ENCODE measurements at regions of chr3 and their contacts with region 1.

Region 1: DNA sequence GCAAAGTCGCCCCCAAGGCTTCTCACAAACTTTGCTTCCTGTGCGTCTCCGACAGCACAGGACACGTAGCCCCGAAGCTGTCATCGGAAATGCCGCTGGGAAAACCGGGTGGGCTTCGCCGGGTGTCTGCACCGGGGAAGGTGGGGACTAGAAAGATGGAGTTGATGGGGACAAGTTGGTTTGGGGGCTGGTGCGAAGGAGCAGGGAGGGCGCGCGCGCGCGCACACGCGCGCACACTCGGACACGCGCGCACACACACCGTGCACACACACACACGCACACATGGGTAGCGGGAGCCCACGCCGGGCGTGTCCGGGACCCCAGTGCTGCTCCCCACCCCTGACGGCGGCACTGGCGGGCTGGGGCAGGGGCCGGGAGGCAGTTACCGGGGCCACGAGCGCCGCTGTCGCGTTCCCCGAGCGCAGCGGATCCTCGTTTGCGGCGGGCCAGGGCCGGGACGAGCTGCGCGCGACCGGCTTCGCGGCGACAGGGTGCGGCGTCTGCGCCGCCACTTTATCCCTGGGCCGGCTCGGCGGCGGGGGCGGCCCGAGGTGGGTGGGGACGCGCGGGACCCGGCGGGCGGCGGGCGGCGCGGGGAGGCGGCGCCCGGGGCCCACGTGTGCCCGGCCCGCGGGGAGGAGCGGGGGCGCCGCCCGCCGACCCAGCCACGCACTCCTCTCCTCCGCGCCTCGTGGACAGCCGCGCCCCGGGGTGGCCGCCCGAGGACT is 547 bp upstream of the MGLL start:
- DNase-seq: no peak
- ATAC-seq: peak; percentile 53
- H3K4me3 ChIP-seq: peak overlapping the region; percentile 95
- H3K27ac ChIP-seq: peak overlapping the region; percentile 76
- H3K4me1 ChIP-seq: peaks cover 7% of the 10 kb centered on the region
- H3K27me3 ChIP-seq: no peaks in the 10 kb centered on the region
- CTCF ChIP-seq: peak in 1 of 3 experiments; percentile 70; a peak in 3 of 6 replicates
- EP300 ChIP-seq: no peak
- POLR2A ChIP-seq: peak; percentile 68
- RAD21 ChIP-seq: peak; percentile 52

Region 2: DNA sequence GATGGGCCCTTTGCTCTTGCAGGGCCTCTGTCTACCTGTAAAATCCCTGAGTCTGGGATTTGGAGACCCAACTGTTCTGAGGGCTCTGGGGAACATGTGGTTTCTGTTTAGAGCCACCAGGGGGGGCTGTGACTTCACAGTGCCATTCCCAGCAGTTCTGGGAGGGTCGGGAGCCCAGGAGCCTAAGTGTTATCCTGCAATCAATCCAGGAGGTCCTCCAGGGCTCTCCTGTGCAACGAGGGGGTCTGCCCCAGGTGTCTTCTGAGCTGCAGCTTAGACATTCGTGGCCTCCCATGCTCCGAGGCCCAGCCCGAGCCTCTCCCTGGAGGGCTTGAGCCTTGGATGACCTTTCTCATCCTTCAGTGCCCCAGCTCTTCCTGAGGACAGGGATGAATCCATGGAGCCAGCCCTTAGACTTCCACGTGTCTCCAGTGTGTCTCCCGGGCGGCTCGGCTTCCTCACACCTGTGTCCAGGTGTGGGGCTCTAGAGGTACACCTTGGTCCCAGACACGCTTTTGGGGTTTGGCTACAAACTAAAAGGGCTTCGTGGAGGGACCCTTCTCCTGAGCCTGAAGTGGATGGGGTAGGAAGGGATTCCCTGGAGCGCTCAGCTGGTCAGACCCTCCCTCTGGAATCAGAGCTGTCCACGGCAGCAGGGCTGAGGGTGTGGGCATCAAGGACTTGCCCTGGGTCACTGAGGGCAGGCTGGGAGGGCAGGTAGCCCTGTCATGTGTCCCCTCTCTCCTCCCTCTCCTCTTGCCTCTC is 170.4 kb before region 1 on chr3:
- CTCF ChIA-PET with region 1: interaction called, 5 read pairs
- POLR2A ChIA-PET with region 1: no interaction called
- RAD21 ChIA-PET with region 1: interaction called, 4 read pairs
- SMC1A ChIA-PET with region 1: interaction called, 3 read pairs
- in situ Hi-C with region 1: no loop called
- intact Hi-C with region 1: loop called (anchors 2 kb)
- DNase-seq: no peak
- ATAC-seq: peak; percentile 94
- H3K4me3 ChIP-seq: no peak overlapping the region
- H3K27ac ChIP-seq: no peak overlapping the region
- H3K4me1 ChIP-seq: peaks cover 6% of the 10 kb centered on the region; the same call in 1 of the 2 replicates
- H3K27me3 ChIP-seq: no peaks in the 10 kb centered on the region; a peak in 1 of 4 replicates
- CTCF ChIP-seq: peak; percentile 72 to 91 (median 80)
- EP300 ChIP-seq: no peak
- POLR2A ChIP-seq: no peak
- RAD21 ChIP-seq: peak; percentile 97

Region 3: DNA sequence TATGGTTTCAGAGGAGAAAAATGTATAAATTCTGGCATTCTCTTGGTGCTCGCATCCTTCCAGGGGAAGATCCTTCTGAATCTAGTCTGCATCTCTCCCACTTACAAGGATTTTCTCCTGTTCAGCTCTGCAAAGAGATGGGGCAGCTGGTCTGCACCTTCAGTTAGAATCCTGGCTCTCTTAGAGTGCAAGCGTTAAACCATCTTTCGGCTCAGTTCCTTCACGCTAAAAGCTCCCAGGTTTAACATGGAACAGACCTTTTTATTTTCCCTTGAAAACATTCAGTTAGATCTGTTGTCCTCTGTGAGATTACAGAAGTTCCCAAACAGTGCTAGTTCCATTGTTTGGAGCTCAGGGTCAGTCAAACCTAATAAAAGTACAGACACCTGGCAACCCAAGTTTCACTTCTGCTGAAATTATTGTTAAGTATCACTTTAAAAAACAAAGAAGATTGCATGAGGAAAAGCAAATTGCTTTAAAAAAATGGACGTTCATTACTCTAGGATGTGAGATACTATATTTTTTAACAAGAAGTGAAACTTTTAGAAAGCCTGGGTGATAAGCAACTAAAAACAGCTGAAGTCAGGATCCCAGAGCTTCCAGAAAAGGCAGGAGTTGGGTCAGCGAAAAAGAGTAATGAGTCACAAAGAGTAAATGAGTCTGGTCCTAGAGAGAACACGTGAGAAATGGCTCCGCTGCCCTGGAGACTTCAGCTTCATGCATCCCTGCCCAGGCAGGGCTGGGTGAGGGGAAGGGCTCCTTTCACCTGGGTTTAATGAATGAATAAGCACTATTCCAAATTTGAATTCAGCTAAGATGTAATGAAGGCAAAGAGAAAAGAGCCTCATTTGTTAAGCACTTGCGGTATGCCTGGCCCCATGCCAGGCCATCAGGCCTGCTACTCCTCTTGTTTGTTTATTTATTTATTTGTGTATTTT is 86.8 kb before region 1 on chr3:
- CTCF ChIA-PET with region 1: interaction called, 5 read pairs
- POLR2A ChIA-PET with region 1: interaction called, 15 read pairs
- RAD21 ChIA-PET with region 1: interaction called, 11 read pairs
- SMC1A ChIA-PET with region 1: interaction called, 22 read pairs
- in situ Hi-C with region 1: no loop called
- intact Hi-C with region 1: loop called (anchors 5 kb)
- DNase-seq: peak; percentile 85
- ATAC-seq: peak; percentile 85
- H3K4me3 ChIP-seq: peak overlapping the region; percentile 77
- H3K27ac ChIP-seq: peak overlapping the region; percentile 97
- H3K4me1 ChIP-seq: peaks cover 31% of the 10 kb centered on the region
- H3K27me3 ChIP-seq: no peaks in the 10 kb centered on the region
- CTCF ChIP-seq: no peak
- EP300 ChIP-seq: peak in 1 of 2 experiments; percentile 71
- POLR2A ChIP-seq: no peak
- RAD21 ChIP-seq: no peak

Region 4: GRCh38 chr3:127775398-127776109 is 47.3 kb before region 1 on chr3:
- CTCF ChIA-PET with region 1: interaction called, 3 read pairs
- POLR2A ChIA-PET with region 1: interaction called, 5 read pairs
- RAD21 ChIA-PET with region 1: no interaction called
- SMC1A ChIA-PET with region 1: interaction called, 12 read pairs
- in situ Hi-C with region 1: no loop called
- intact Hi-C with region 1: no loop called
- DNase-seq: no peak
- ATAC-seq: peak; percentile 79
- H3K4me3 ChIP-seq: peak overlapping the region; percentile 19; the same call in 1 of the 2 replicates
- H3K27ac ChIP-seq: peak overlapping the region; percentile 94
- H3K4me1 ChIP-seq: peaks cover 67% of the 10 kb centered on the region
- H3K27me3 ChIP-seq: no peaks in the 10 kb centered on the region
- CTCF ChIP-seq: no peak
- EP300 ChIP-seq: peak in 1 of 2 experiments; percentile 41; a peak in 2 of 4 replicates
- POLR2A ChIP-seq: no peak
- RAD21 ChIP-seq: no peak

Region 5: DNA sequence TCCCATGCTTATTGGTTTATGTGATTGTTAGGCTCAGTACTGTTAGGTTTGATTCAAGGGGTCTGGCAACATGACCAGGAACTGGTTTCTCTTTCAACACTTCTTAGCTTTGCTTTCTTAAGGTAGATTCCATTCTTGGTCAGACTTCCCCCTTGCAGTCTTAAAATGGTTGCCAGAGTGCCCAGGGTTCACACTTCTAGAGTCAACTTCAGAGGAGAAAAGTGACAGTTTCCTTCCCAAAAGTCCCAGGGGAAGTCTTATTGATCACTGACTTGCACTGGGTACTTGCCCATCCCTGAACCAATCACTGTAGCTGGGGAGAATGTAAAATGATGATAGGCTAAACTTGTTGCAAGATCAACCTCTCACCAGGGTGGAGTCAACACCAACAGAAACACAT is 14.7 kb before region 1 on chr3:
- CTCF ChIA-PET with region 1: interaction called, 12 read pairs
- POLR2A ChIA-PET with region 1: interaction called, 13 read pairs
- RAD21 ChIA-PET with region 1: interaction called, 10 read pairs
- SMC1A ChIA-PET with region 1: interaction called, 10 read pairs
- in situ Hi-C with region 1: no loop called
- intact Hi-C with region 1: no loop called
- DNase-seq: peak; percentile 63
- ATAC-seq: peak; percentile 85
- H3K4me3 ChIP-seq: 0 out of 2 replicates have a peak overlapping the region, but pooled peaks have one; percentile 4
- H3K27ac ChIP-seq: peak overlapping the region; percentile 45
- H3K4me1 ChIP-seq: peaks cover 22% of the 10 kb centered on the region
- H3K27me3 ChIP-seq: no peaks in the 10 kb centered on the region
- CTCF ChIP-seq: no peak
- EP300 ChIP-seq: peak in 1 of 2 experiments; percentile 22; a peak in 1 of 4 replicates
- POLR2A ChIP-seq: no peak
- RAD21 ChIP-seq: no peak

Region 6: DNA sequence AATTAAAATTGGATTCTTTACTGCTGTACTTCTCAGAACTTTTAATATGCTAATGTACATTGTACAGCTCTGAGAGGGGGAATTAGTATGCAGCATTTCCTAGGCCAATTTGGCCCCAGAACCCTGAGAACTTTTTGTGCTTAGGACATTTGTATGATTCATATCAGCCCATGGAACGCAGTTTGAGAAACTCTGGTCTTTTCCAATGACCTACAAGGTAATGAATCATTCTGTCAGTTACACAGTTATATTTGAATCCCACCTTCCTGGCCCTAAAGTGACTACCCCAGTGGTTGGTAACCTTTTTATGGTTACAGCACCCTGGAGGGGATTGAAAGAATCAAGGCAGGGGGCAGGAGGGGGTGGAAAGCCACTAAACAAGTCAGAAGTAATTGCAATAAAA is 66.6 kb after region 1 on chr3:
- CTCF ChIA-PET with region 1: no interaction called
- POLR2A ChIA-PET with region 1: no interaction called
- RAD21 ChIA-PET with region 1: no interaction called
- SMC1A ChIA-PET with region 1: no interaction called
- in situ Hi-C with region 1: no loop called
- intact Hi-C with region 1: no loop called
- DNase-seq: no peak
- ATAC-seq: no peak
- H3K4me3 ChIP-seq: no peak overlapping the region
- H3K27ac ChIP-seq: peak overlapping the region; percentile 47; the same call in 1 of the 2 replicates
- H3K4me1 ChIP-seq: peaks cover 3% of the 10 kb centered on the region; the same call in 1 of the 2 replicates
- H3K27me3 ChIP-seq: no peaks in the 10 kb centered on the region
- CTCF ChIP-seq: no peak
- EP300 ChIP-seq: no peak
- POLR2A ChIP-seq: no peak
- RAD21 ChIP-seq: no peak

Region 7: DNA sequence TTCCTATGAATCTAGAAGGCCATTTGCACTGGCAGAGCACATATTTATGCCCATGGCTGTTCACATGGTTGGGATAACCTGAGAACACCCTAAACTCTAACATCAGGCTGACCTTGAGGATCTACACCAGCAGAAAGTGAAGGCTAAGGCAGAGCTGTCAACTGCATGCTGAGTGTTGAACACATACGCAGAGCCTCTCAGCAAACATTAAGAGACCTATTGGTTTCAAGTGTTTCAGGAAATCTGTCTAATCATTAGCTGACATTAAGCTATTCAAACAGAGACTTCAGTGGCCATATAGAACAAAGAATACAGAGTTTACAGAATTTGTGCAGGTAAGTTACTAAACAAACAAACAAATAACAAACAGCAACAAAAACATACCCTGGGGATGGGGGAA is 213.3 kb after region 1 on chr3:
- CTCF ChIA-PET with region 1: no interaction called
- POLR2A ChIA-PET with region 1: no interaction called
- RAD21 ChIA-PET with region 1: no interaction called
- SMC1A ChIA-PET with region 1: no interaction called
- in situ Hi-C with region 1: no loop called
- intact Hi-C with region 1: no loop called
- DNase-seq: no peak
- ATAC-seq: no peak
- H3K4me3 ChIP-seq: no peak overlapping the region
- H3K27ac ChIP-seq: no peak overlapping the region
- H3K4me1 ChIP-seq: no peaks in the 10 kb centered on the region
- H3K27me3 ChIP-seq: no peaks in the 10 kb centered on the region; a peak in 1 of 4 replicates
- CTCF ChIP-seq: no peak
- EP300 ChIP-seq: no peak
- POLR2A ChIP-seq: no peak
- RAD21 ChIP-seq: no peak

Measured in GM12878 (cell line).